ENCODE measurements at regions of chr5 and their contacts with region 1.

Region 1: DNA sequence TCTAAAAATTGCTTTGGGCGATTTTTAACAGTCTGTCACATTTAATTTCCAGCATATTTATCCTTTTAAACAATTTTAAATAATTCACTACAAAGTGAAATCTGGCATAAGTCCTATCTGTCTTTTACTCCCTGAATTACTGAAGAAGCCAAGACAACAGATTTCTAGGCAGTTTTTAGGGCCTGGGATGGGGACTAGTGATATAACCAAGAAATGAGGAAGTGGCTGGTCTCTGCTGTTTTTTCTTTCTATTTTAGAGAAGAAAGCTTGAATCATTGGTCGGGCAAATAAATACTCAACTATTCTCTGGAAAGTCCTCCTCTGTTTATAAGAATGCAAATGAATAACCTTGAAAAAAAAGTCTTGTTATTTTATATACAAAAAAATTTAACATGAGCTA is 79.7 kb upstream of the SSBP2 start:
- DNase-seq: no peak
- ATAC-seq: no peak
- H3K4me3 ChIP-seq: no peak overlapping the region
- H3K27ac ChIP-seq: no peak overlapping the region
- H3K4me1 ChIP-seq: peaks cover 0 to 13% (median 0%) of the 10 kb centered on the region in 9 donors
- H3K27me3 ChIP-seq: no peaks in the 10 kb centered on the region
- CTCF ChIP-seq: no peak

Region 2: DNA sequence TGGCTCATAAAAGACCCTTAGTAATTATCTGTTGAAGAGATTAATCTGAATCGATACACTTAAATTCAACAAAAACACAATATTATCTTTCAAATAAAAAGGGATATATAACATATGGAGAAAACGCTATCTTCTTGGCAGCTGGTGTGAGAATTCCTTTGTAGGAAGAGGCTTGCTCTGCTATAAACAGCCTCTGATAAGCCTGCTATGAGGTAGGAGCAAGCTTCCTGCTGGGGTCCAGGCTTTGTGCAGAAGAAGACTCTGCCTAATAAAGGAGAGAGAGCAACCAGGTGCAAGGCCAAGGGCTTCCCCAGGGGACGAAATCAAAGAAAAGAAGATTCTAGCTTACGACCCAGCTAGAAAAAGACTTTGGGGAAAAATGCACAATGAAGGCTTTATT is 36.4 kb before region 1 on chr5:
- intact Hi-C with region 1: loop called in 1 of 10 experiments (anchors 5 kb)
- DNase-seq: no peak
- ATAC-seq: peak in 3 of 8 donors; percentile 42 to 89 (median 73)
- H3K4me3 ChIP-seq: no peak overlapping the region
- H3K27ac ChIP-seq: peak overlapping the region in 1 of 10 donors; percentile 8
- H3K4me1 ChIP-seq: peaks cover 3 to 18% (median 11%) of the 10 kb centered on the region in 9 donors
- H3K27me3 ChIP-seq: no peaks in the 10 kb centered on the region
- CTCF ChIP-seq: no peak